SK-N-SH (cell line): ENCODE measurements at regions of chr9 and their contacts with region 1.

Region 1: DNA sequence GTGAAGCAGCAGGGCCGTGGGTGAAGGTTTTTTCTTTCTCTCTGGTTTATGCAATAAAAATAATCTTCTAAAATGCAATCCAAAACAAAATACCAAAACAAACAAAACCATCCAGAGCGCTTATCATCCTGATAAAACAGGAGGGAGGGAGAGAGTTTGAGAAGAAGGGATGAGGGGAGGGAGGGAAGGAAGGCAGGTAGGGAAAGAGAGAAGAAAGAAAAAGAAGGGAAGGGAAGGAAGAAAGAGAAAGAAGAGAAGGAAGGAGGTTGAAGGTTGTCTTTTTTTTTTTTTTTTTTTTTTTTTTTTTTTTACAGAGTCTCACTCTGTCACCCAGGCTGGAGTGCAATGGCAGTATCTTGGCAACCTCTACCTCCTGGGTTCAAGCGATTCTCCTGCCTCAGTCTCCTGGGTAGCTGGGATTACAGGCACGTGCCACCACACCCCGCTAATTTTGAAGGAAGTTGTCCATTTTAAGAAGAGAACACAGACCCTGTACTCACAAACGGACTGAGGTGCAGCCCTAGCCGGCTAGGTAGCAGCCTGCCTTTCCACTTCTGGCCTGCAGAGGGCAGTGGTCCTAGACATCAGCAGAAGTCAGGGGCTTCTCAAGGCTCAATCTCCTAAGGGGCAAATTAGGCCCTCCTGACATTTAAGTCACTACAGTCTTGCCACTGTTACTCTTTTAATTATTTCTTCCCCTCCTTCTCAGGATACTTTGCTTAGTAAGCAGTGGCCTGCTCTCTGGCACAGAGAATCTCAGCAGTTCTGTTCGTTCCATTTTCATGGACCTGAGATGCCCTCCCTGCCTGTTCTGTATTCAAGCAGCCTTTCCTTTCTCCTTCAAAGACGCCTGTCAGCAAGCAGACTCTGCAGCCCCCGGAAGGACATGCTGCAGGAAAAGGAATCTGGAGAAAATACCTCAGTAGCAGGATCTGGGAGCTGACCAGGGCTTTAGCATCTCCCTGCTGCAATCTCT is 76.4 kb downstream of the EPB41L4B start:
- DNase-seq: peak; percentile 71
- H3K4me3 ChIP-seq: peak overlapping the region in 1 of 2 experiments; percentile 49; a peak in 1 of 4 replicates
- H3K27ac ChIP-seq: no peak overlapping the region
- H3K4me1 ChIP-seq: peaks cover 0 to 9% of the 10 kb centered on the region in 2 experiments; a peak in 1 of 4 replicates
- H3K27me3 ChIP-seq: no peaks in the 10 kb centered on the region
- CTCF ChIP-seq: peak; percentile 93
- EP300 ChIP-seq: no peak
- RAD21 ChIP-seq: peak; percentile 70

Region 2: GRCh38 chr9:109232449-109233237 is 11.8 kb before region 1 on chr9:
- CTCF ChIA-PET with region 1: interaction called, 15 read pairs
- POLR2A ChIA-PET with region 1: no interaction called
- DNase-seq: no peak
- H3K4me3 ChIP-seq: no peak overlapping the region
- H3K27ac ChIP-seq: no peak overlapping the region
- H3K4me1 ChIP-seq: peaks cover 0 to 7% of the 10 kb centered on the region in 2 experiments; a peak in 1 of 4 replicates
- H3K27me3 ChIP-seq: no peaks in the 10 kb centered on the region
- CTCF ChIP-seq: no peak
- EP300 ChIP-seq: no peak
- RAD21 ChIP-seq: no peak

Region 3: DNA sequence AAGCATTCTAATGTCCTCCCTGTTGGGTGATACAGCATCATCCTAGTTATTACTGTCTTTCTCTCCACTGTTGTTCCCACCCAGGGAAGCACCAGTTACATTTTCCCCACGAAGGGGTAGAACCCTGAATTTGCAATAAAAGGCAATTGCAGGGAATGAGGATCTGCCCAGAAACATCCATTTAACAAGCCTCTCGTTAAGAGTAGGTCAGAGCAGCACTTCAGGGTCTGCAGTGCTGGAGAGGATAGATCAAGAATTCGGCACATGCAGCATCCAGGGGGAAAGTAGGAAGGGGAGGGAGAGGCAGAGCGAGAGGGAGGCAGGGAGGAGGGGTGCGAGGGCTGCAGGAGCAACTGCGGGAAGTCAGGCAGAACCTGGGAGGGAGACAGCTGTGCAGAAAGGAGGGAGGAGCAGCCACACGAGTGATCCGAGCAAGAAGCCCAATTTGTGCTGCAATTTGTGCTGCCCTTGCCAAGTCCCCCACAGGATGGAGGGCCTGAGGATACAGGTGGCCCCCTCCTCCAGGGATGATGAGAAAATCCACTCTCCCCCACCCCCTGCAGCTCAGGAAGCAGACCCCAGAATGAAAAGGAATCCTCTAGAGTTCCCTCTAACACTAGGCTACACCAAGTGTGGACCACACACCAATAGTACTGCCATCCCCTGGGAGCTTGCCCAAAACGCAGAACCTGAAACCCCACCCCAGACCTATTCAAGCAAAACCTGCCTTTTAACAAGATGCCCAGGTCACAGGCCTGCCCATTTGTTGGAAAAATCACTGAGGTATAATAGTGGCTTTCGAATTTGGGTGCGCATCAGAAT is 14.2 kb after region 1 on chr9:
- CTCF ChIA-PET with region 1: interaction called, 12 read pairs
- POLR2A ChIA-PET with region 1: no interaction called
- DNase-seq: peak; percentile 44
- H3K4me3 ChIP-seq: no peak overlapping the region
- H3K27ac ChIP-seq: no peak overlapping the region
- H3K4me1 ChIP-seq: peaks cover 0 to 4% of the 10 kb centered on the region in 2 experiments; a peak in 1 of 4 replicates
- H3K27me3 ChIP-seq: no peaks in the 10 kb centered on the region
- CTCF ChIP-seq: no peak
- EP300 ChIP-seq: no peak
- RAD21 ChIP-seq: no peak

Region 4: GRCh38 chr9:109320742-109321448 is 76.5 kb after region 1 on chr9 and contains the start of gene EPB41L4B:
- CTCF ChIA-PET with region 1: interaction called, 30 read pairs
- POLR2A ChIA-PET with region 1: no interaction called
- DNase-seq: peak; percentile 91
- H3K4me3 ChIP-seq: peak within 1 kb of the TSS; percentile 55 to 74
- H3K27ac ChIP-seq: no peak within 1 kb of the TSS; a peak in 1 of 4 replicates
- H3K4me1 ChIP-seq: peaks cover 0 to 24% of the 10 kb centered on the region in 2 experiments; a peak in 1 of 4 replicates
- H3K27me3 ChIP-seq: peaks cover 6% of the 10 kb centered on the region; the same call in 1 of the 2 replicates
- CTCF ChIP-seq: peak; percentile 92
- EP300 ChIP-seq: 0 out of 4 replicates have a peak, but pooled peaks of 1 of the 2 experiments have one; percentile 42
- RAD21 ChIP-seq: peak; percentile 82
- polyA plus RNA-seq, gene EPB41L4B: 0.59 and 0.84 TPM in 2 replicates

Region 5: DNA sequence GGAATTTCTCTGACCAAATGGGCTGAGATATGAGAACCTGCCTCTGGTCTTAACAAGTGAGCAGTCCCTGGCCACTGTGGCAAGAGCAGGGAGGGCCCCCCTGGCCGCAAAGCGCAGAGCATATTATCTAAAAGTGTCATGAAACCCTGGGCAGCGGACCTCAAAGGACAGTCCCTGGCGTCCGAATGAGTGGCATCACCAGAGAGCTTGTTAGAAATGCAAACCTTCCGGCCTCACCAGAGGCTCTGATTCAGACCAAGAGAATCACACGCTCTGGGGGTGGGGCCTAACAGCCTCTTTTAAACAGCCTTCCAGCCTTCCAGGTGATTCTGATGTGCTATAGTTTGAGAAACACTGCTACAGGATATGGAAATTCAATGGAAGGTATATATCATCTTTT is 242.8 kb after region 1 on chr9:
- CTCF ChIA-PET with region 1: no interaction called
- POLR2A ChIA-PET with region 1: no interaction called
- DNase-seq: no peak
- H3K4me3 ChIP-seq: no peak overlapping the region
- H3K27ac ChIP-seq: no peak overlapping the region
- H3K4me1 ChIP-seq: peaks cover 2 to 6% of the 10 kb centered on the region in 2 experiments; a peak in 1 of 4 replicates
- H3K27me3 ChIP-seq: no peaks in the 10 kb centered on the region
- CTCF ChIP-seq: no peak
- EP300 ChIP-seq: no peak
- RAD21 ChIP-seq: no peak